Activated naive CD4-positive, alpha-beta T cell treated with anti-CD3 and anti-CD28 coated beads, Interleukin-2, amount 10 ng/mL, durations not matched to agents 7 days and 5 days (primary cell): ENCODE measurements at regions of chr14 and their contacts with region 1.

Region 1: GRCh38 chr14:60331201-60332045 is 82.4 kb downstream of the PPM1A start:
- DNase-seq: peak; percentile 82
- H3K4me3 Mint-ChIP-seq: peak overlapping the region; percentile 82
- H3K27ac Mint-ChIP-seq: peak overlapping the region; percentile 93
- H3K4me1 Mint-ChIP-seq: peaks cover 49% of the 10 kb centered on the region
- H3K27me3 Mint-ChIP-seq: peaks cover 41% of the 10 kb centered on the region

Region 2: GRCh38 chr14:60349663-60350365 is 18.4 kb after region 1 on chr14:
- CTCF ChIA-PET with region 1: interaction called, 15 read pairs
- DNase-seq: peak; percentile 40
- H3K4me3 Mint-ChIP-seq: no peak overlapping the region
- H3K27ac Mint-ChIP-seq: no peak overlapping the region
- H3K4me1 Mint-ChIP-seq: no peaks in the 10 kb centered on the region
- H3K27me3 Mint-ChIP-seq: peaks cover 8% of the 10 kb centered on the region

Region 3: GRCh38 chr14:60585676-60586075 is 254.3 kb after region 1 on chr14:
- CTCF ChIA-PET with region 1: no interaction called
- DNase-seq: no peak
- H3K4me3 Mint-ChIP-seq: no peak overlapping the region
- H3K27ac Mint-ChIP-seq: no peak overlapping the region
- H3K4me1 Mint-ChIP-seq: no peaks in the 10 kb centered on the region
- H3K27me3 Mint-ChIP-seq: peaks cover 11% of the 10 kb centered on the region